AG04450 (cell line): ENCODE measurements at regions of chr7 and their contacts with region 1.

Region 1: GRCh38 chr7:131513245-131514061 is 43.0 kb downstream of the PODXL start:
- DNase-seq: peak; percentile 68
- H3K4me3 ChIP-seq: no peak overlapping the region
- H3K27ac ChIP-seq: no peak overlapping the region
- H3K27me3 ChIP-seq: no peaks in the 10 kb centered on the region
- CTCF ChIP-seq: peak; percentile 98

Region 2: GRCh38 chr7:131188367-131189339 is 324.8 kb before region 1 on chr7:
- CTCF ChIA-PET with region 1: no interaction called
- POLR2A ChIA-PET with region 1: no interaction called
- DNase-seq: peak; percentile 81
- H3K4me3 ChIP-seq: no peak overlapping the region
- H3K27ac ChIP-seq: peak overlapping the region; percentile 59
- H3K27me3 ChIP-seq: no peaks in the 10 kb centered on the region
- CTCF ChIP-seq: no peak

Region 3: DNA sequence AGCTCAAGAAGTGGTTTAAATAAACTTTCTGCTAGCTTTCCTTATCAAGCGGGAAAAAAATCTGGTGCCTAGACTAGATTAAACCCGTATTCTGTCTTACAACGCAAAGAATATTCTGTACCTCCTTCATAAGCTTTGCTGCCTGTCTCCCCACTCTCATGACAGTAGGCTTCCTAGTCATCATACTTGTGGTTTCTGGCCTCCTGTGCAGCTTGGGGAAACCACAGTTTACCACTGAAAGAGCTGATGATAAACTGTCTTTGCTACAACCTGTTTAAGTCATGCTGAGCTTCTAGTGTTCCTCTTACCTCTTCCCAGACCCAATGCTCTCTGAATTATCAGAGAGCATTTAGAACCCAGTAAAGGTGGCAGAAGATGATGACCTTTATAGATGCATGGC is 12.0 kb before region 1 on chr7:
- CTCF ChIA-PET with region 1: interaction called, 50 read pairs
- POLR2A ChIA-PET with region 1: no interaction called
- DNase-seq: peak; percentile 65
- H3K4me3 ChIP-seq: no peak overlapping the region
- H3K27ac ChIP-seq: peak overlapping the region; percentile 65
- H3K27me3 ChIP-seq: no peaks in the 10 kb centered on the region
- CTCF ChIP-seq: no peak

Region 4: GRCh38 chr7:131533151-131533559 is 19.7 kb after region 1 on chr7:
- CTCF ChIA-PET with region 1: interaction called, 18 read pairs
- POLR2A ChIA-PET with region 1: no interaction called
- DNase-seq: no peak
- H3K4me3 ChIP-seq: no peak overlapping the region
- H3K27ac ChIP-seq: no peak overlapping the region
- H3K27me3 ChIP-seq: peaks cover 3% of the 10 kb centered on the region
- CTCF ChIP-seq: no peak